HepG2 (cell line): ENCODE measurements at regions of chr10 and their contacts with region 1.

Region 1: GRCh38 chr10:103859161-103860086 is 4.0 kb upstream of the SH3PXD2A start:
- DNase-seq: peak; percentile 72
- ATAC-seq: peak; percentile 67
- H3K4me3 ChIP-seq: 0 out of 6 replicates have a peak overlapping the region, but pooled peaks of 1 of the 3 experiments have one; percentile 6
- H3K27ac ChIP-seq: no peak overlapping the region
- H3K4me1 ChIP-seq: peaks cover 34% of the 10 kb centered on the region
- H3K27me3 ChIP-seq: no peaks in the 10 kb centered on the region; a peak in 1 of 5 replicates
- CTCF ChIP-seq: peak; percentile 90
- EP300 ChIP-seq: no peak
- POLR2A ChIP-seq: no peak
- RAD21 ChIP-seq: peak; percentile 76

Region 2: DNA sequence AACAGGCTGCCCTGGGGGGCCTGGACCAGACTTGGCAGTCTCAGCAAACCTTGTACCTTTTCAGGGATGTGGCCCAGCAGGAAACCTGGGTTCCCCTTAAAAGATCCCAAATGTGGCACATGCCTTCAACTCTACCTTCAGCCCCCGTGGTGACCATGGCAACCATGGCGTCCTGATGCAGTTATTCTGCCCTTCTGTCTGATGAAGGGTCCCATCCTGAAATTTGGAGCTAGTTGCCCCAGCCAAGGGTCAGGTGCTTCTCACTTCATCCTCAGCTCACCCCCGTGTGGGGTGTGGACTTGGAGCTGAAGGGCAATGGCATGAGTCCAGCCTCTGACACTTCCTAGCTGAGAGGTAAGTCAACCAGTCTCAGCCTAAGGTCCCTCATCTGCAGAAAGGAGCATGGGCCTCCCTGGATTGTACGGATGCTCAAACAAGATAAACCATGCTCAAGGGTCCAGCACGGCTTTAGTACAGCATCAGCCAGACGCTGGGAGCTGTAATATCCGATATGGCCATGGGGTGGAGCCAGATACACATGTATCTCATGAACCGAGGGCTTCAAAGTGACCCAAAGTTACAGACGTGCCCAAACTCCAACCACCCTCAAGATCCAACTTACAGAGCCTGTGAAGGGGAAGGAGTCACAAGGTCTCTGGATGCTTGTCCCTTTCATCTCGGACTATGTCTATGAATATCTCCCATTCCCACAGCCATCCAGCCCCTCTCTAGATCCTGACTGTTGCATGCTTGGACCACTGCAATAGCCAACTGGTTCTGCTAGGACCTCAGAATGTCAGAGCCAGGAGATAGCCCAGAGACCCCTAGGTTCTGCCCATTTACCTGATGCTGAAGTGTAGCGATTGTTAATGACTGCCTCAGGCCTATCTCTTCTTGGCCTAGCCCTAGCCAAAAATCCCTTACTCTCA is 146.6 kb before region 1 on chr10:
- CTCF ChIA-PET with region 1: interaction called, 26 read pairs
- POLR2A ChIA-PET with region 1: interaction called, 10 read pairs
- in situ Hi-C with region 1: loop called (anchors 5 kb)
- intact Hi-C with region 1: loop called (anchors 1 kb)
- DNase-seq: peak; percentile 57
- ATAC-seq: peak; percentile 59
- H3K4me3 ChIP-seq: no peak overlapping the region
- H3K27ac ChIP-seq: peak overlapping the region; percentile 11
- H3K4me1 ChIP-seq: peaks cover 58% of the 10 kb centered on the region
- H3K27me3 ChIP-seq: no peaks in the 10 kb centered on the region
- CTCF ChIP-seq: peak; percentile 90
- EP300 ChIP-seq: no peak
- POLR2A ChIP-seq: no peak
- RAD21 ChIP-seq: peak; percentile 82

Region 3: DNA sequence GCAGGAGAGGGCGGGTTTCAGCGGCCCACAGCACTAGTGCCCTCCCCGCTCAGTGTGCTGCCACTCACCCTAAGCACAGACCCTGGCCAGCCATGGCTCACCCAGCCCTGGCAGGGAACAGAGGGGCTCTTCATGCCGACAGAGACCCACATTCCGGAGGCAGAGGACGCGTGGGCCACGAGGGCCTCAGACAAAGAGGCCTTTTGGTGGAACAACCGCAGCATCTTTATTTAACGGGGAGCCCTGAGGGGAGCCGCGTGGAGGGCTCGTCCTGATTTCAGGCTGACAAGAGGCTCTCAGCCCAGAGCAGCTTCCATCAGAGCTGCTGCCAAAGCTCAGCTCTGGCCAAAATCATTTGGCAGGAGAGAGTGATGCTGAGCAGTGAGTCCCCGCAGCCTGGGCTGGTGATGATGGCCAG is 131.9 kb before region 1 on chr10:
- CTCF ChIA-PET with region 1: no interaction called
- POLR2A ChIA-PET with region 1: no interaction called
- in situ Hi-C with region 1: no loop called
- intact Hi-C with region 1: no loop called
- DNase-seq: no peak
- ATAC-seq: no peak; the same call in 2 of the 3 replicates
- H3K4me3 ChIP-seq: no peak overlapping the region
- H3K27ac ChIP-seq: no peak overlapping the region
- H3K4me1 ChIP-seq: no peaks in the 10 kb centered on the region
- H3K27me3 ChIP-seq: no peaks in the 10 kb centered on the region
- CTCF ChIP-seq: no peak
- EP300 ChIP-seq: no peak
- POLR2A ChIP-seq: no peak
- RAD21 ChIP-seq: no peak

Region 4: GRCh38 chr10:103759100-103759781 is 100.2 kb before region 1 on chr10:
- CTCF ChIA-PET with region 1: no interaction called
- POLR2A ChIA-PET with region 1: interaction called, 4 read pairs
- in situ Hi-C with region 1: no loop called
- intact Hi-C with region 1: loop called (anchors 1 kb)
- DNase-seq: peak; percentile 80
- ATAC-seq: peak; percentile 76
- H3K4me3 ChIP-seq: no peak overlapping the region
- H3K27ac ChIP-seq: peak overlapping the region; percentile 53
- H3K4me1 ChIP-seq: peaks cover 31% of the 10 kb centered on the region
- H3K27me3 ChIP-seq: no peaks in the 10 kb centered on the region
- CTCF ChIP-seq: no peak
- EP300 ChIP-seq: 0 out of 4 replicates have a peak, but pooled peaks of 1 of the 2 experiments have one; percentile 24
- POLR2A ChIP-seq: no peak
- RAD21 ChIP-seq: no peak

Region 5: GRCh38 chr10:103789771-103790201 is 69.6 kb before region 1 on chr10:
- CTCF ChIA-PET with region 1: no interaction called
- POLR2A ChIA-PET with region 1: interaction called, 107 read pairs
- in situ Hi-C with region 1: loop called (anchors 5 kb)
- intact Hi-C with region 1: loop called (anchors 1 kb)
- DNase-seq: no peak
- ATAC-seq: no peak
- H3K4me3 ChIP-seq: no peak overlapping the region
- H3K27ac ChIP-seq: peak overlapping the region; percentile 27
- H3K4me1 ChIP-seq: peaks cover 81% of the 10 kb centered on the region
- H3K27me3 ChIP-seq: no peaks in the 10 kb centered on the region
- CTCF ChIP-seq: no peak
- EP300 ChIP-seq: no peak
- POLR2A ChIP-seq: no peak
- RAD21 ChIP-seq: no peak

Region 6: GRCh38 chr10:103833731-103834365 is 25.6 kb before region 1 on chr10:
- CTCF ChIA-PET with region 1: no interaction called
- POLR2A ChIA-PET with region 1: interaction called, 26 read pairs
- in situ Hi-C with region 1: no loop called
- intact Hi-C with region 1: no loop called
- DNase-seq: peak; percentile 88
- ATAC-seq: peak; percentile 79
- H3K4me3 ChIP-seq: peak overlapping the region; percentile 2 to 29 (median 21); a peak in 3 of 6 replicates
- H3K27ac ChIP-seq: peak overlapping the region; percentile 81
- H3K4me1 ChIP-seq: peaks cover 94% of the 10 kb centered on the region
- H3K27me3 ChIP-seq: no peaks in the 10 kb centered on the region
- CTCF ChIP-seq: 0 out of 2 replicates have a peak, but pooled peaks have one; percentile 10
- EP300 ChIP-seq: peak in 1 of 2 experiments; percentile 79; a peak in 2 of 4 replicates
- POLR2A ChIP-seq: no peak
- RAD21 ChIP-seq: peak; percentile 40; the same call in 1 of the 2 replicates